Left cardiac atrium (tissue), 4 donors: ENCODE measurements at regions of chr20 and their contacts with region 1.

Region 1: DNA sequence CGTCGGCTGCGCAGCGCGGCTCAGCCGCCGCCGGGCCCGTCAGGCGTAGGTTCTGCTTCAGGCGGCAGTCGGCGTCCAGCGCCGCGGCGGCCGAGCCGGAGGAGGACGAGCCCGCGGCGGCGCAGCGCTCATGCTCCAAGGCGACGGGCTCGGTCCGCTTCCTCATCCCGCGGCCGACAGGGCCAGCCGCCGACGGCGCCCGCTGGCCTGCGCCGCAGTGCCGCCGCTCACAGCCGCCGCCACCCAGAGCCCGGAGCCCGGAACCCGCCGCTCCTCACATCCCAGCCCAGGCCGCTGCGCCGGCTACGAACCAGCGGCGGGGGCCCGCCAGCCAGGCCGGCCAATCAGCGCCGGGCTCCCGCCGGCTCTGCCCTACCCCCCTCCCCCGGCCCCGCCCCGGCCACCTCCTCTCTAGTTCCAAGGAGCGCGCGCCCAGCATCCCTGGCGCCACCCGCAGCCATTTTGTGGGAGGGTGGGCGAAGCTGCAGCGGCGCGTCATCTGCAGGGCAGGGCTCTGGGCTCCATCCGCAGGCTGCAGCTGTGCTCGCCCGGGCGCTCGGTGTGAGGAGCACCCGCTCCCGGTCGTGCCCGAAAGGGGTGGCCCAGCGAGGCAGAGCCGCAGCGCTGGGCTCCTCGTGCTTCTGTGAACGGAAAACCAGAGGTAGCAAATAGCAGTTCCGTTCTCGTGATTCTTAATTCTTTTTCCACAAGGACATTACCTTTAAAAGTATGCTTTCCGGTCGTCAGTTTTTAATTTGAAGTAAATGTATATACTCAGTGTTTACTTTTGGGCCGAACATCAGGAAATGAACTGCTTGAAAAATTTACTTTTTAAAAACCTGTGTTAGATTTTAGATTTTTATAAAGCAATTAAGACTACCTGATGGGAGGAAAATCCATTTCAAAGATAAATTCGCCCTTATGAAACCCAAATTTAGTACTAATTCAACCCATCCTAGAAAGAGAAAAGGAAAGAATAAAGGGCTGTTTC is at the start of gene ABHD12:
- DNase-seq: peak; percentile 97
- ATAC-seq: peak; percentile 97 to 99
- total RNA-seq, gene ABHD12: 22.6 to 30.2 TPM

Region 2: DNA sequence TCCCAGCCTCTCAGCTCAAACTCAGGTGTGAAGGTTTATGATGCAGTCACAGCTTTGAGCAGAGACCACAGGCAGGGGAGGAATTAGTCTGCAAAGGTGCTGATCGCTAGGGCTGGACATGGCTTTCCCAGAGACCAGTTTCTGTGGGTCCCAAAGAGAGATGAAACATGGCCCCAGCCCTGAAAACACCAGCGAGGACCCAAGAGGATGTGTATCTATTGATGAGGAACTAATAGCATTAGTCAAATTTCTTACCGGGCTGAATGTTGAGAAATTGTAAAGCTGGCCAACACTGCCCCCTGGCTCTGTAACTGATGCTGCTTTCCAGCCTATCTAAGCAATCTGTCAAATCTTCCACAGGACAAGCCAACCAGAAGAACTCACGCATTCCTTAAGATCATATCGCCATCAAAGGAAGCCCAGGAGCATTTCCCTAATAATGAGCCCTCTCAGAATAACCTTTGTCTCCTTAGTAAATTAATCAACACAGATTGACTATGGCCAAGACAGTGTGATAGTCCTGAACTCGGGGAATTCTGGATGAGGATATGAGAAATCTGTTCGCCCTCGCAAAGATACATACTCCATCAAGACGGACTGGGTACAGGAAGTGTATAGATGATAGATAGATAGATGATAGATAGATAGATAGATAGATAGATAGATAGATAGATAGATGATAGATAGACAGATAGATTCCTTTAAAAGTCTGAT is 325.1 kb before region 1 on chr20:
- intact Hi-C with region 1: loop called in 1 of 2 experiments (anchors 10 kb)
- DNase-seq: peak; percentile 55
- ATAC-seq: peak; percentile 77 to 88